WTC11 (cell line): ENCODE measurements at regions of chr11 and their contacts with region 1.

Region 1: DNA sequence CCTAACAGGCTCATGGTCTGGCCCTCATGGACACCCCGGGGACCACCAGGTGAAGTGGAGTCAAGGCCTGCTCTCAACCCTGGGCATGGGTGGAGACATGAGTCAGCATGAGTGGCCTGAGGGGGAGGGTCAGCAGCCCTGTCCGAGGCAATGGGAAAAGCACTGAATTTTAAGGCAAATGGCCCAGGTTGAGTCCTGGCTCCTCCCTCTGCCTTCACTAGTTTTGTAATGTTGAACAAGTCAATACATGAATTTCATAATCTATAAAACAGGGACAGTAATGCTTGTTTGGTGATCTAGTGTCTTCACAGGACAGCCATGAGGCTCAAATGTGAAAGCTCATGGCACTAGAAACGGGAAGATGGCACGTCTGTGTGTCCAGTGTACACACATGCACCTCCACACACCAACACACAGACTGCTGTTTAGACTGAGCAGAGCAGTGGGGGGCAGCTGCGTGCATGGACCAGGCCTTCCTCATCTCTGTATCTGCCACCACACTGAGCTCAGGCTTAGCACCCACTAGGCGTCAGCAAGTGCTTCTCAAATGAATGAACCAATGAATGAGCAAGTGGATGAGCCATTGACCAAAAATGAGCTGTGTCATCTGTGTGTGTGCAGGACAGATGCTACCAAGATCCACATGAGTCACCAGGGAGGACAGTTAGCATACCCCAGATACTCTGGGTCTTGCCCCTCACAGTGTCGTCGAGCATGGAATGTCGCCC is 63.4 kb downstream of the NRXN2 start:
- DNase-seq: no peak
- ATAC-seq: no peak
- H3K4me3 Mint-ChIP-seq: no peak overlapping the region
- H3K27ac Mint-ChIP-seq: no peak overlapping the region
- H3K4me1 Mint-ChIP-seq: 0 out of 2 replicates have a peak, but pooled peaks cover 2% of the 10 kb centered on the region
- H3K27me3 Mint-ChIP-seq: peaks cover 3% of the 10 kb centered on the region; the same call in 1 of the 2 replicates
- CTCF ChIP-seq: no peak

Region 2: DNA sequence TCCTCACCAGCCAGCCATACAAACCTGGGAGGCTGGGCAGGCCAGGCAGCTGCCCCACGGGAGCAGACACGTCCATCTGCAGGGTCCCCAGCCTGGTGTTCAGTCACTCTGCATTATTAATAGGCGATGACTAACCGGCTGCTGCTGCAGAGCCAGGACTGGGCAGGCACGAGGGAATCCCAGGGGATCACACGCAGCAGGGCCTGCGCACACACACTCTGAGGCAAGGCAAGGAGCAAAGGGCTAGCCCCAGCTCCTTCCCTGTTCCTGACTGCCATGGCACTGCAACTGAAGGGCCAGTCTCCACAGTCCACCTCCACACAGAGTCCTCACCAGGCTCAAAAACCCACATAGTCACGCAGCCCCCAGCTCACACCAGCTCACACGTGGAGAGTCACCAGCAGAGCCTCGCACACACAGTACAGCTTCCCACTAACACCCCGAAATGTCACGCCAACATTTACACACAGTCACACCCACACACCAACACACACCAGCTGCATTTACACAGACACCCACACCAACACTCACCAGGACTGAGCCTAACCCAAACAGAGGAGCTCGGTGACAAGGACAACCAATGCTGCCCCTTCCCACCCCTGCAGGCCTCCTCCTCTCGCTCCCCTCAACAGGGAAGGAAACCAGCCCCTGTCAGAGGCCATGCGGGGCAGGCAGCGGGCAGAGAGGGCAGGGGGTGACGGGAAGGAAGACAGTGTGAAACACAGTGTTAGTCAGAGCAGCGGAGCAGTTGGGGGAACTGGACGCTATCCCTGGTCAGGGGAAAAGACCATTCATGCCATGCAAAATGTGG is 16.1 kb after region 1 on chr11:
- CTCF ChIA-PET with region 1: interaction called, 11 read pairs
- POLR2A ChIA-PET with region 1: interaction called, 3 read pairs
- DNase-seq: no peak
- ATAC-seq: no peak
- H3K4me3 Mint-ChIP-seq: no peak overlapping the region
- H3K27ac Mint-ChIP-seq: no peak overlapping the region
- H3K4me1 Mint-ChIP-seq: no peaks in the 10 kb centered on the region
- H3K27me3 Mint-ChIP-seq: peaks cover 65% of the 10 kb centered on the region
- CTCF ChIP-seq: no peak

Region 3: GRCh38 chr11:64703048-64703447 is 43.5 kb after region 1 on chr11:
- CTCF ChIA-PET with region 1: interaction called, 18 read pairs
- POLR2A ChIA-PET with region 1: no interaction called
- DNase-seq: no peak
- ATAC-seq: no peak
- H3K4me3 Mint-ChIP-seq: no peak overlapping the region
- H3K27ac Mint-ChIP-seq: no peak overlapping the region
- H3K4me1 Mint-ChIP-seq: no peaks in the 10 kb centered on the region; the same call in 1 of the 2 replicates
- H3K27me3 Mint-ChIP-seq: peaks cover 35% of the 10 kb centered on the region
- CTCF ChIP-seq: no peak